GM23248 (cell line): ENCODE measurements at regions of chr11 and their contacts with region 1.

Region 1: DNA sequence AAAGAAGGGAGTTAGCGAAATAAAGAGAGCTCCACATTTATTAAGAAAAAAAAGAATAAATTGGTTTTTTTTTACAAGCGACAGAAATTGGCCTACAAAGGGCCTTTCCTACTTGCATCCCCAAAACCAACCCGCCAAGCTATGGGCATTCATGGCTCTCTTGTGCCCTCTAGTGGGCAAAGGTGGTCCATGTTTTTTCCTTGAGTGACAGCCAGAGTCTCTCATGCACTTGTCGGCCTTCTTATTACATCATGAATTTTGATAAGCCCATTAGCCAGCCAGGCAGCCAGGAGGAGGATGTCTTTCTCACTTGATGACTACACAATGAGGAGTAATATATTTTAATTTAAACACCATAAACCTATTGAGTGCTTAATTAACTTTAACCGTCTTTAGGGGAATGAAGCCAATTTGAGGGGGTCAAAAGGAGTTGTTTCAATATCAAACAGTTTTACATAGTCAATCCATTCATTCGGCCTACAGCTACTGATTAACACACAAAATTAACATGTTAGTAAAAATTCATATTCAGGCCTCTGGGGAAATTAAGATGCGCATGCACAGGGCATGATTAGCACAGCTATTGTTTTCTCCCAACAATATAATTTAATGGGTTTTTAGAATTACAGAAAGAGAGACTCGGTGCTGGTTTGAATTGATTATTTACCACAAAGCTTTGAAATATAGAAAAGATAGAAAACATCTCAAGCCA is 85.5 kb downstream of the RCN1 start:
- DNase-seq: peak; percentile 80
- H3K4me3 ChIP-seq: no peak overlapping the region
- H3K27ac ChIP-seq: no peak overlapping the region
- H3K4me1 ChIP-seq: peaks cover 9% of the 10 kb centered on the region
- H3K27me3 ChIP-seq: peaks cover 32% of the 10 kb centered on the region

Region 2: GRCh38 chr11:31107062-31107461 is 1069.3 kb before region 1 on chr11:
- in situ Hi-C with region 1: loop called (anchors 25 kb)
- DNase-seq: peak; percentile 64
- H3K4me3 ChIP-seq: no peak overlapping the region
- H3K27ac ChIP-seq: no peak overlapping the region
- H3K4me1 ChIP-seq: no peaks in the 10 kb centered on the region
- H3K27me3 ChIP-seq: no peaks in the 10 kb centered on the region

Region 3: GRCh38 chr11:31240338-31240904 is 936.0 kb before region 1 on chr11:
- in situ Hi-C with region 1: loop called (anchors 25 kb)
- DNase-seq: peak; percentile 39
- H3K4me3 ChIP-seq: no peak overlapping the region
- H3K27ac ChIP-seq: no peak overlapping the region
- H3K4me1 ChIP-seq: no peaks in the 10 kb centered on the region
- H3K27me3 ChIP-seq: no peaks in the 10 kb centered on the region; the same call in 1 of the 2 replicates

Region 4: GRCh38 chr11:31487848-31488247 is 688.5 kb before region 1 on chr11:
- in situ Hi-C with region 1: loop called (anchors 10 kb)
- DNase-seq: peak; percentile 66
- H3K4me3 ChIP-seq: no peak overlapping the region
- H3K27ac ChIP-seq: no peak overlapping the region
- H3K4me1 ChIP-seq: no peaks in the 10 kb centered on the region; the same call in 1 of the 2 replicates
- H3K27me3 ChIP-seq: no peaks in the 10 kb centered on the region

Region 5: DNA sequence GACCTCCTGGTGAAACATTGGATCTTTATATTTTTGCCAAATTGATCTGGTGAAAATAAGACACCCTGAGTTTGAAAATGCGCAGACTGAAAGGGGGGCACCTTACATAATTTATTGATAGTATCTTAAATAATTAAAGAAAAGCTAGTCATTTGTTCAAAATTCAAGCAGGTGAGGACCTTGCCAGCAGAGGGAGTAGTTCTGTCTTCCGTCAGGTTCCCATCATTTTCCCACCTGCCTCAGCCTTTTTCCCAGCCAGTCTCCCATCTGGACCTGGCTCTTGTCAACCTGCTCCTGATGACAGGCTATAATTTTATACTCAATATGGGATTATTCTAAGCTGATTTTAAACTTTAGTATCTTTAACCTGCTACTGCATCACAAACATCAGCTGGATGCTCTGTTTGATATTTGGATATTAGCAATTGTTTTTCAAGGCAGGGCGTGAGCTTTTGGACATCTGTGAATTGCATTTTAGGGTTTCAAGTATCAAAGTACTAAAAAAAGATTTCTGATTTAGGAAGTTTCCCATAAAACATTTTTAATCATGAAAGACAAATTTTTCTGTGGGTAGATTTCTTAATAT is 534.8 kb before region 1 on chr11:
- in situ Hi-C with region 1: loop called (anchors 25 kb)
- DNase-seq: peak; percentile 54
- H3K4me3 ChIP-seq: no peak overlapping the region
- H3K27ac ChIP-seq: no peak overlapping the region
- H3K4me1 ChIP-seq: peaks cover 33% of the 10 kb centered on the region
- H3K27me3 ChIP-seq: no peaks in the 10 kb centered on the region

Region 6: GRCh38 chr11:31921081-31921480 is 255.3 kb before region 1 on chr11:
- in situ Hi-C with region 1: no loop called
- DNase-seq: no peak
- H3K4me3 ChIP-seq: no peak overlapping the region
- H3K27ac ChIP-seq: no peak overlapping the region
- H3K4me1 ChIP-seq: no peaks in the 10 kb centered on the region
- H3K27me3 ChIP-seq: peaks cover under 1% of the 10 kb centered on the region

Region 7: GRCh38 chr11:31958076-31958735 is 218.2 kb before region 1 on chr11:
- in situ Hi-C with region 1: no loop called
- DNase-seq: peak; percentile 79
- H3K4me3 ChIP-seq: no peak overlapping the region
- H3K27ac ChIP-seq: no peak overlapping the region
- H3K4me1 ChIP-seq: 0 out of 2 replicates have a peak, but pooled peaks cover 14% of the 10 kb centered on the region
- H3K27me3 ChIP-seq: no peaks in the 10 kb centered on the region

Region 8: GRCh38 chr11:32052218-32052617 is 124.2 kb before region 1 on chr11:
- in situ Hi-C with region 1: loop called (anchors 5 kb)
- DNase-seq: peak; percentile 77
- H3K4me3 ChIP-seq: no peak overlapping the region
- H3K27ac ChIP-seq: no peak overlapping the region
- H3K4me1 ChIP-seq: peaks cover 25% of the 10 kb centered on the region
- H3K27me3 ChIP-seq: no peaks in the 10 kb centered on the region

Region 9: GRCh38 chr11:32290783-32291182 is 114.4 kb after region 1 on chr11:
- in situ Hi-C with region 1: no loop called
- DNase-seq: no peak
- H3K4me3 ChIP-seq: no peak overlapping the region
- H3K27ac ChIP-seq: no peak overlapping the region
- H3K4me1 ChIP-seq: no peaks in the 10 kb centered on the region
- H3K27me3 ChIP-seq: peaks cover 8% of the 10 kb centered on the region